Activated CD4-positive, alpha-beta T cell treated with anti-CD3 and anti-CD28 coated beads for 36 hours (primary cell): ENCODE measurements at regions of chr10 and their contacts with region 1.

Region 1: DNA sequence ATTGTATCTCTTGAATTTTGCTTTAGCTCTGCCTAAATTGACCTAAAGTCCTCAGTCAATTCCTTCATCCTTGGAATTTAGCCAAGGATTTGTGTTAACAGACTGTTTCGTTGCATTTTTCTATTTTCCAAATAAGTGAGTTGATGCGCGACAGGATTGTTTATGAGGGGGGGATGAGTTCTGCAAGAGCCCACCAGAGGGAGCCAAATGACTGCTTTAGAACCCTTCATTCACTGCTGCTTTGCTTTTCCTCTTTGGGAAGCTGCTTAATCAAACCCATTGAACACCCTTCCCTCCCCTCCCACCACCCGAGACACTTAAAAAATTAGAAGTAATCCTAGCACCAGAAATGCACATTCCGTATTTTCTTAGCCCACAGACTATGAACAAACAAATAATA is 33.7 kb upstream of the PTF1A start:
- DNase-seq: peak; percentile 58
- ATAC-seq: peak; percentile 57
- H3K4me3 Mint-ChIP-seq: no peak overlapping the region
- H3K27ac Mint-ChIP-seq: no peak overlapping the region
- H3K4me1 Mint-ChIP-seq: peaks cover 6% of the 10 kb centered on the region
- H3K27me3 Mint-ChIP-seq: peaks cover 32% of the 10 kb centered on the region

Region 2: DNA sequence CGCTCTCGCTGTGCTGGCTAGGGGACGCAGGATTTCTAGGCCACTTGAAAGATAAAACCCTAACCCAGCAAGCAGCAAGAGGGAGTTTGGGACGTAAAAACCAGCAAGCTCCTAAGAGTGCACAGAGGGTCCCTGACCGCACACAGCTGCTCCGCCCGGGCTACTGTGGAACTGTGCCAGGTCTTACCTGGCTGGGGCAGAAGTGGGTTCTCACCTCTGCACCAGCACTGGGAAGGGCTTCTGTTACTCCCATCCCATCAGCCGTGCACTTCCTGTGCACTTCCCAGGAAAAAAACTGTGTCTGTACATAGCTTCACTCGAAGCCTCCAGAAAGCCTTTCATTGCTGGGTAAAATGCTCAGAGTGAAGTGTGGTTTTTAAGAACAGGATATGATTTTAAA is 12.1 kb before region 1 on chr10:
- CTCF ChIA-PET with region 1: interaction called, 10 read pairs
- POLR2A ChIA-PET with region 1: no interaction called
- intact Hi-C with region 1: no loop called
- DNase-seq: no peak
- ATAC-seq: no peak
- H3K4me3 Mint-ChIP-seq: no peak overlapping the region
- H3K27ac Mint-ChIP-seq: no peak overlapping the region
- H3K4me1 Mint-ChIP-seq: no peaks in the 10 kb centered on the region
- H3K27me3 Mint-ChIP-seq: peaks cover 5% of the 10 kb centered on the region

Region 3: GRCh38 chr10:23293145-23293724 is 134.9 kb after region 1 on chr10:
- CTCF ChIA-PET with region 1: interaction called, 16 read pairs
- POLR2A ChIA-PET with region 1: no interaction called
- intact Hi-C with region 1: loop called (anchors 1 kb)
- DNase-seq: peak; percentile 66
- ATAC-seq: peak; percentile 78
- H3K4me3 Mint-ChIP-seq: no peak overlapping the region
- H3K27ac Mint-ChIP-seq: no peak overlapping the region
- H3K4me1 Mint-ChIP-seq: no peaks in the 10 kb centered on the region
- H3K27me3 Mint-ChIP-seq: peaks cover 9% of the 10 kb centered on the region

Region 4: GRCh38 chr10:23362879-23363792 is 204.8 kb after region 1 on chr10:
- CTCF ChIA-PET with region 1: no interaction called
- POLR2A ChIA-PET with region 1: no interaction called
- intact Hi-C with region 1: no loop called
- DNase-seq: peak; percentile 67
- ATAC-seq: peak; percentile 75
- H3K4me3 Mint-ChIP-seq: peak overlapping the region; percentile 39
- H3K27ac Mint-ChIP-seq: peak overlapping the region; percentile 96
- H3K4me1 Mint-ChIP-seq: peaks cover 60% of the 10 kb centered on the region
- H3K27me3 Mint-ChIP-seq: no peaks in the 10 kb centered on the region

Region 5: GRCh38 chr10:23656735-23657134 is 498.4 kb after region 1 on chr10:
- CTCF ChIA-PET with region 1: no interaction called
- POLR2A ChIA-PET with region 1: no interaction called
- intact Hi-C with region 1: loop called in 1 of 2 experiments (anchors 1 kb)
- DNase-seq: no peak
- ATAC-seq: no peak
- H3K4me3 Mint-ChIP-seq: no peak overlapping the region
- H3K27ac Mint-ChIP-seq: no peak overlapping the region
- H3K4me1 Mint-ChIP-seq: no peaks in the 10 kb centered on the region
- H3K27me3 Mint-ChIP-seq: peaks cover 7% of the 10 kb centered on the region

Region 6: DNA sequence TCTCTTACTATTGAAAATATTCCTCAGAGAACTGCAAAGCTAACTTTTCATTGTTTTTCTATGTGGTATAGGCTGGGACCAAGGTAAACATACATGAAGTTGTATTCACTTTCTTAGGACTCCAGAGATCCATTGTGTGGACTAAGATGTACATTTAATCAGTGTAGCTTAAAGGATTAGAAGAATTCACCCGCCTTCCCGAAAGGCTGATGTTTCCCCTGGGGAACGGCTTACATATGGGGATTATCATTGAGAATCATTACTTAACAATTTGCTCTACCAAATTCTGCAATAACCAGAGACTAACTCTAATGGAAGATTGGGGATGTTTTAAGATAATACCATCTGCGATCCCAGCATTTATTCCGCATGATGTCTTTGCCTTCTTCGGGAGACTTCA is 793.5 kb after region 1 on chr10:
- CTCF ChIA-PET with region 1: no interaction called
- POLR2A ChIA-PET with region 1: no interaction called
- intact Hi-C with region 1: no loop called
- DNase-seq: no peak
- ATAC-seq: no peak
- H3K4me3 Mint-ChIP-seq: no peak overlapping the region
- H3K27ac Mint-ChIP-seq: no peak overlapping the region
- H3K4me1 Mint-ChIP-seq: no peaks in the 10 kb centered on the region
- H3K27me3 Mint-ChIP-seq: no peaks in the 10 kb centered on the region

Region 7: DNA sequence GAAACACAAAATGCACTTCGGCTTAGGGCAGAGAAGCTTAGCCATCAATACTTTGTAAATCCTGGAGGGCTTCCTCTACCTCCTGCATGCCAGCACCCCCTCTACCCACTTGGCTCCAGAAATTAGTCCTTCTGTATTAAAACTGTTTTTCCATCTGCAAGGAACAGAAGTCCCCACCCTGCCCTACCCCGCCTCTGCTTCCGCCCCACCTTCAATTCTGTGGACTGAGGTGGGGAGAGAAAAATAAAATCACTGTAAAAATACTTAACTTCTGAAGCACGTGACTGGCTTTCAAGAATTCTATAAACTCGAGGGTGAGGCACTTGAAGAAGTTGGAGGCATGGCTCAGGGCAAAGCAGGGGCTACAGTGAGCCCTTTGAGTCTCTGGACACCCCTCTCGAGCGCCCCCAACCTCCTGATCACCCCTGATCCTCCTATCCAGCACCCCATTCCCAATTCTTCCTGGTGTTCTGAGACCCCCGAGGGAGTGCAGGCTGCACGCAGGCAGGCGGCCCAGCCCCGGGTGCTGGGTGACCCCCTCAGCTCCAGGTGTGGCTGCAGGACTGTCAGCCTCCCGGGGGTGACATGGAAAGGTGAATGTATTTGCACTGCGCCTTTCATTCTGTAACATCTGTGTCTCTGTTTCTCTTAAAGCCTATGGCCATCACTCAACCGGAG is 1043.3 kb after region 1 on chr10:
- CTCF ChIA-PET with region 1: no interaction called
- POLR2A ChIA-PET with region 1: no interaction called
- intact Hi-C with region 1: loop called (anchors 2 kb)
- DNase-seq: no peak
- ATAC-seq: no peak
- H3K4me3 Mint-ChIP-seq: no peak overlapping the region
- H3K27ac Mint-ChIP-seq: no peak overlapping the region
- H3K4me1 Mint-ChIP-seq: peaks cover 8% of the 10 kb centered on the region
- H3K27me3 Mint-ChIP-seq: peaks cover 20% of the 10 kb centered on the region